Heart right ventricle (tissue), 16 donors: ENCODE measurements at regions of chr2 and their contacts with region 1.

Region 1: DNA sequence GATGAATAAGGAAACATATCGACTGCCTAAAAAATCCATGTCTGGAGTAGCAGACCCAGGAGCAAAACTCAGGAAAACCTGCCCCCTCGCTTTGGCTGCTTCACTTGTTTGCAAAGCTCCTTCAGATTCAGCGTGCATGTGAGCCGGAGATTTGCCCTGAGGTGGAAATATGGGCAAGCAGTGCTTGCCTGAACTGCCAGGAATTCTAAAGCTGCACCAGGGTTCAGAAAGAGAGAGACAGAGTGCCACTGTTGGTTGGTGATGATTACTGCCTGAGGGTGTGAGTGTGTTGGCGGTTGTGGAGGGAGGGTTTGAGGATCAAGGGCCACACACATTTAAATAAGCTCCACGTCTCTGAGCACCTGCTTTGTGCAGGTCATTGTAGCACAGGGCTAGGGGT is 139.6 kb upstream of the RGPD4 start:
- DNase-seq: no peak
- ATAC-seq: no peak
- H3K4me3 ChIP-seq: no peak overlapping the region
- H3K27ac ChIP-seq: no peak overlapping the region
- H3K4me1 ChIP-seq: no peaks in the 10 kb centered on the region
- H3K27me3 ChIP-seq: no peaks in the 10 kb centered on the region
- CTCF ChIP-seq: no peak

Region 2: GRCh38 chr2:107669335-107669734 is 17.7 kb before region 1 on chr2:
- intact Hi-C with region 1: no loop called
- DNase-seq: no peak
- ATAC-seq: no peak
- H3K4me3 ChIP-seq: no peak overlapping the region
- H3K27ac ChIP-seq: no peak overlapping the region
- H3K4me1 ChIP-seq: no peaks in the 10 kb centered on the region
- H3K27me3 ChIP-seq: no peaks in the 10 kb centered on the region
- CTCF ChIP-seq: peak in 6 of 9 donors; percentile 33 to 54 (median 39)

Region 3: DNA sequence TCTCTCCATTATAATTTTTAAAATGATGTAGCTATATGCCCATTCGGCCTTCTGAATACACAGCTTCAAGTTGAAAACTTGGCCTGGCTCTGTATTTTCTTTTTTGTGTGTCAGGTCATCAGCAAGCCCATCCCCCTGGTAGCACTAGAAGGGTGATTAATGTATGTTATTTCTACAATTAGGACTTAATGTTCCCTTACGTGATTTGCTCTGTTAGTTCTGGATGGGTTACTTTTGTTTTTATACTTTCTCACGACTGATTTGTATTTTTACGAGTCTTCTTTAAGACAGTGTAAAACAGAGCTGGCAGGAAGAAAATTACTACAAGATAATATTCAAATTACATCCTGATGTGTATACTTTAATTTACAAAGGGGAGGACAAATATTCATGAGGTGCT is 51.2 kb after region 1 on chr2:
- intact Hi-C with region 1: loop called in 1 of 10 experiments (anchors 5 kb)
- DNase-seq: no peak
- ATAC-seq: no peak
- H3K4me3 ChIP-seq: no peak overlapping the region
- H3K27ac ChIP-seq: no peak overlapping the region
- H3K4me1 ChIP-seq: no peaks in the 10 kb centered on the region
- H3K27me3 ChIP-seq: no peaks in the 10 kb centered on the region
- CTCF ChIP-seq: no peak

Region 4: GRCh38 chr2:107808959-107809358 is 121.9 kb after region 1 on chr2:
- intact Hi-C with region 1: no loop called
- DNase-seq: peak; percentile 20 to 21
- ATAC-seq: peak; percentile 42 to 98 (median 92)
- H3K4me3 ChIP-seq: no peak overlapping the region
- H3K27ac ChIP-seq: peak overlapping the region in 5 of 10 donors; percentile 23 to 51 (median 29)
- H3K4me1 ChIP-seq: peaks cover 0 to 21% (median 0%) of the 10 kb centered on the region in 9 donors
- H3K27me3 ChIP-seq: no peaks in the 10 kb centered on the region
- CTCF ChIP-seq: no peak